ENCODE measurements at regions of chr1 and their contacts with region 1.

Region 1: DNA sequence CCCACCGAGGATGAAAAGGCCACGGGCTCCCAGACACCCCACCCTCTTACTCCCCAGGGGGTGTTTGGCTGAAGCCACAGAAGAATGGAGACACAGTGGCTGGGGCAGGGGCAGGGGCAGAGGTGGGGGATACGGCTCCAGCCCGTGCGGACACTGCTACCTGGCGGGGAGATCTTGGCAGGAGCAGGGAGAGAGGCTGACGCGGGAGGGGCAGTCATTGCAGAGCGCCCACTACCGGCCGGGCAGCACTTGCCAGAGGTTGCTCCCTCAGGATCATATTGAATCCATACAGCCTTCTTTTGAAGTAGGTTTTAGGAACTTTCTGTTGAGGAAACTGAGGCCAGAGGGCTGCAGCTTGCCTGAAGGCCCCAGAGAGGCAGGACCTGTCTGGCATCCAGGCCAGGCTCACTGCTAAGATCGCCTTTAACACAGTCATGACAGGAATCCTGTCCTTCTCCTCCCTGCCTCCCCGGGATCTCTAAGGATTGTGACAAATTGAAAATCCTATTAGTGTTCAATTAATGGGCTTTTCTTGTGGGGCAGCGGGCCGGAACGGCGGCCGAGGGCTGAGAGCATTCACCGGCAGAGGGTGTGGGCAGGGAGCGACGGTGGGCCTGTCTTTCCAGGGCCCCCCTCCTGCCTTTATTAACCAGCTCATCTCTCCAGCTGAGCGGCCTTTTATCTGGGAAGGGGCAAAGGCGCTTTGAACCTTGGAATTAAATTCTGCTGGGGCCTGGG is 65.5 kb upstream of the WNT4 start:
- DNase-seq: peak in 1 of 2 donors; percentile 53
- ATAC-seq: peak; percentile 40 to 69 (median 60)
- H3K4me3 ChIP-seq: no peak overlapping the region
- H3K27ac ChIP-seq: no peak overlapping the region
- H3K4me1 ChIP-seq: no peaks in the 10 kb centered on the region
- H3K27me3 ChIP-seq: peaks cover 0 to 57% (median 18%) of the 10 kb centered on the region in 3 donors
- CTCF ChIP-seq: peak; percentile 48

Region 2: DNA sequence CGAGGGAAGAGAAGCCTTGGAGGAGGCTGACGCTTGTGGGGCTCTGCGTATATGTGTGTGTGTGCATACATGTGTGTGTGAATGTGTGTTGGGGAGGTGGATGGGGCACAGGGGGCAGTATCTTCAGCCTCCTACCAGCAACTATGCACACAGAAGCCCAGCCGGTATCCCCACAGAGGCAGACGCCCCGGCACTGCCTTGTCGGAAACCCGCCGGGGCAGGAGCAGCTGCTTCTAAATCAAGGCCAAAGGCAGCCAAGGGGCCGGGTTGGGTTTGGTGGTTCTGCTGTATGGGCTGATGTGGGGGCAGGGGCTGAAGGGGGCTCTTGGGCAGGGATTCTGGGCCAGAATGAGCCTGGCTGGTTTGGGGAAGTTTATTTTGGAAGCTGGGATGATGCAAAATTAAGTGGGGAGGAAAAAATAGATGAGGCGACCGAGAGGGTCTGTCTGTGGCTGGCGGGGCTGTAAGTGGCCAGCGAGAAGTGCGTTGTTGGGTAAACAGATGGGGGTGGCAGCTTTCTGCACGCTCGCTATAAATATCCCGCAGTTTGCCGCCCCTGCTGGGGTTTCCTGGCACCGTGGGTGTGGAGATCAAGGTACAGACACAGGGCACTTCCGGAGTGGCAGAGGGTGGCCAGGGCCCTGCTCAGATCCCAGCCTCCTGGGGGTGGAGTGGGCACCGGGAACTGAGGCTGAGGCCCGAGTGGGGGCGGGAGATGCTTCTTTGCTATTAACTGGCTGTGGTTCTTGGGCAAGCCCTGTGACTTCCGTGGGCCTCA is 54.6 kb before region 1 on chr1:
- intact Hi-C with region 1: loop called in 1 of 2 experiments (anchors 5 kb)
- DNase-seq: no peak
- ATAC-seq: no peak
- H3K4me3 ChIP-seq: no peak overlapping the region
- H3K27ac ChIP-seq: no peak overlapping the region
- H3K4me1 ChIP-seq: no peaks in the 10 kb centered on the region
- H3K27me3 ChIP-seq: peaks cover 0 to 3% (median 0%) of the 10 kb centered on the region in 3 donors
- CTCF ChIP-seq: no peak

Region 3: GRCh38 chr1:22168412-22168973 is 39.9 kb before region 1 on chr1:
- intact Hi-C with region 1: no loop called
- DNase-seq: no peak
- ATAC-seq: no peak
- H3K4me3 ChIP-seq: no peak overlapping the region
- H3K27ac ChIP-seq: no peak overlapping the region
- H3K4me1 ChIP-seq: no peaks in the 10 kb centered on the region
- H3K27me3 ChIP-seq: peaks cover 0 to 2% (median 0%) of the 10 kb centered on the region in 3 donors
- CTCF ChIP-seq: no peak

Region 4: DNA sequence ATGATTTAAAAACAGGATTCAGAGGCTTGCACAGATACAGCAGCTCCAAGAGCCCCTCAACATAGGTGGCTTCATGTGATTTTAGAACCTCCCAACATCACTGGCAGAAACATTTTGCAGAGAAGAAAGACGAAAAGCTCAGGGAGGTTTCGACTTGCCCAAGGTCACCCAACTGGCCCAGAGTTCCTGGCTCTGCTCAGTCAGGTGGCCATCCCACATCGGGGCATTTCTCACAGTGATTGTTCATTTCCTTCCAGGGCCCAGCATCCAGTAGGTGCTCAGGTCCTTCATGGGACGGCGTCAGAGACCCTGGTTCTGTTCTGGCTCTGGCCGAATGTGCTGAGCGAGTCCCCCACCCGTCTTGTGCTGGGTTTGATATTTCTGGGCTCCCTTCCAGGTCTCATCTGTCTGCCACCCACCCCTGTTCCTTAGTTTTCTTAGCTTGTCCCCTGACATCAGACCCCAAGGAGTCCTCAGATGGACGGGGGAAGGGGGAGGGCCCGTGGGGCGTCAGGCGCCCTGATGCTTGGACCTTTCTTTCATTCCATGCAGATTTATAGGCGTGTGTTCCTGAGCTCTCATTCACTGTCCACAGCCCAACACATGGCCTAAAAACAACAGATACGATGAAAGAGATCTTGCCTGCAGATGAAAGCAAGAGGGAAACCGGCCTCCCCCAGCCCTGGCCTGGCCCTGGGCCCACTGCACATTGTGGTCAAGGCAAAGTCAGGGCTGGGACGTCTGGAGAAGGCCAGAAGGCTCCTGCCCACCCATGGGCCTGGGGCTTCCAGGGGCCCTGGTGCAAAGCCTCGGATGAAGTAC is 120.1 kb after region 1 on chr1:
- intact Hi-C with region 1: no loop called
- DNase-seq: no peak
- ATAC-seq: no peak
- H3K4me3 ChIP-seq: no peak overlapping the region
- H3K27ac ChIP-seq: no peak overlapping the region
- H3K4me1 ChIP-seq: no peaks in the 10 kb centered on the region
- H3K27me3 ChIP-seq: peaks cover 5 to 6% (median 5%) of the 10 kb centered on the region in 3 donors
- CTCF ChIP-seq: no peak

Measured in psoas muscle (tissue), 8 donors.